Ovary (tissue), 10 donors: ENCODE measurements at regions of chr13 and their contacts with region 1.

Region 1: DNA sequence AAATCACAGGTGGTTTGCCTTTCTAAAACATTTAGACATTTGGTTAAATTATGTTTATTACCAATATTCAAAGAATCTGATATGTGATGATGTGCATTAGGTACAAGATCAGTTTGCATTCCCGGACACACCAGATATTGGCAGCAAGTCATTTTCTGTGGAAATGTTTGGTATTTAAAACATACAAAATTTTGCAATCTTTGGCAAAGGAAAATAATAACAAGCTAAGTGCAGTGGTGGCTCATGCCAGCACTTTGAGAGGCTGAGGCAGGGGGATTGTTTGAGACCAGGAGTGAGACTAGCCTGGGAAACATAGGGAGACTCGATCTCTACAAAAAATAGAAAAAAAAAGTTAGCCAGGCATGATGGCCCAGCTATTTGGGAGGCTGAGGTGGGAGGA is 29.1 kb upstream of the TSC22D1 start:
- DNase-seq: peak in 1 of 5 donors; percentile 21
- H3K4me3 ChIP-seq: no peak overlapping the region
- H3K27ac ChIP-seq: no peak overlapping the region
- H3K4me1 ChIP-seq: peaks cover 3% of the 10 kb centered on the region
- H3K27me3 ChIP-seq: no peaks in the 10 kb centered on the region
- CTCF ChIP-seq: no peak
- EP300 ChIP-seq: no peak
- POLR2A ChIP-seq: no peak

Region 2: GRCh38 chr13:44679597-44679996 is 74.3 kb after region 1 on chr13:
- intact Hi-C with region 1: loop called in 1 of 4 experiments (anchors 10 kb)
- DNase-seq: no peak
- H3K4me3 ChIP-seq: no peak overlapping the region
- H3K27ac ChIP-seq: no peak overlapping the region
- H3K4me1 ChIP-seq: no peaks in the 10 kb centered on the region
- H3K27me3 ChIP-seq: no peaks in the 10 kb centered on the region
- CTCF ChIP-seq: no peak
- EP300 ChIP-seq: no peak
- POLR2A ChIP-seq: no peak